ENCODE measurements at regions of chr5 and their contacts with region 1.

Region 1: DNA sequence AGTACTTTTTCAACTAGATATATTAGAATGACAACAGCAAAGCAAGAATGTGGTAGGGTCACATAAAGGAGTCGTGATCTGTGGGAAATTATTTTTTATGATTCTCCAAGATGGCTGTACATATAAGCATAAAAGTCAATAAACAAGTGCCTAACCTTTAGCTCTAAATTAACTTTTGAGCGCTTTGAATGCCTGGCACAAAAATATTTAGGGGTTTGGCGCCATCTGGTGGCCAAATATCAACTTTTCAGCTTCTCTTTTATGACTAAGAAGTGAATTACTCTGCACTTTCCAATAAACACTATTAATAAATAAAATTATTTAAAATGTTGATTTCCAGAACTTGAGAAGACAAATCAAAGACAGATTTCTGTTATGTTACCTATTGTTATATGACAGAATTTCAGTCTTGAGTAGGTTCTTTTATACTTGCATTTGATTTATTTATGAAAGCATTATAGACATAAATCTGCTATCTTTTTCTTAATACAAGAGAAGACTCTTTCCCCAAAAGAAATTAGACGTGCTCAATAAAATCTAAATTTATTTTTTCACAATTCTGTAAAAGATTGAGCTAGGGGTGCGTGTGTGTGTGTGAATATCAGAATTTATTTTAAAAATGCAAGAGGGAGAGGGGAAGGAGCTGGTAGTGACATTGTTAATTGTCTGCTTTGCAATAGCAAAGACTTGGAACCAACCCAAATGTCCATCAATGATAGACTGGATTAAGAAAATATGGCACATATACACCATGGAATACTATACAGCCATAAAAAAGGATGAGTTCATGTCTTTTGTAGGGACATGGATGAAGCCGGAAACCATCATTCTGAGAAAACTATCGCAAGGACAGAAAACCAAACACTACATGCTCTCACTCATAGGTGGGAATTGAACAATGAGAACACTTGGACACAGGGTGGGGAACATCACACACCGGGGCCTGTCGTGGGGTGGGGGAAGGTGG is 36.7 kb upstream of the ARRDC3 start:
- DNase-seq: peak; percentile 53 to 68
- H3K4me3 ChIP-seq: no peak overlapping the region
- H3K27ac ChIP-seq: no peak overlapping the region
- H3K4me1 ChIP-seq: no peaks in the 10 kb centered on the region
- H3K27me3 ChIP-seq: no peaks in the 10 kb centered on the region
- CTCF ChIP-seq: peak; percentile 87

Region 2: DNA sequence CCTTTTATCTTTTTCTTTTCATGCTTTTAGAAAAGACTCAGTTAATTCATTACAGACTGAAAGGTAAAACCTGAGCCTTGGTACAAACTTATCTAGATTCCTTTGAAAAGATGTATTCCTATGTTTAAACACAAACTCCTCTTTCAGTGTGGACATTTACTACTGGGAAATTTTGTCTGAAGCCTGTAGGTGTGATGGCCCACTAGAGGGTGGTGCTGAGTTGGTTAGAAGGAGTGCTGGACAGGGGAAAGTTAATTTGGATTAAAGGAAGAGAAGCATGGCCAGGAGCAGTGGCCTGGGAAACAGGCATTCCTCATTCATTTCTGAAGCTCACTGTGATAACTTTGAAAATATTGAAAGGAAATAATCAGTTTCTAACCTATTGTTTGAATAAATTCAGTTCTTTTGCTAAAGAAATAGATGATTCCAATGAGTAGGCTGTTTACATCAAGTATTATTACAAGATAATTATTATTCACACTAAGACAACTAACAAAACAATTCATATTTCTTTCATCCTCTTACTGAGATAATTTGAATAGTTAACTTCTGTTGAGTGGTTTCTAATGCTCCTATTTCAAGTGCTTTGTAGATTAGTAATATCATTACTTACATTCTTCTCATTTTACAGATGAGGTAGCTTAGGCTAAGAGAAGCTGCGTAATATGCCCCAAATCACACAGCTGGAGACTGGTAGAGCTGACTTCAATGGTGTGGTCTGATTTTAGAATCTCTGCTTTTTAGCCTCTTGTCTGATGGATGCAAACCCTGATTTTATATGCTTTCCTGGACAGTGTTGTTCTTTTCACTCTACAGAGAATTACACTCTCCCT is 710.3 kb before region 1 on chr5:
- CTCF ChIA-PET with region 1: no interaction called
- POLR2A ChIA-PET with region 1: no interaction called
- intact Hi-C with region 1: loop called (anchors 5 kb)
- DNase-seq: peak in 1 of 2 experiments; percentile 25
- H3K4me3 ChIP-seq: no peak overlapping the region
- H3K27ac ChIP-seq: no peak overlapping the region
- H3K4me1 ChIP-seq: no peaks in the 10 kb centered on the region
- H3K27me3 ChIP-seq: no peaks in the 10 kb centered on the region
- CTCF ChIP-seq: peak; percentile 75

Region 3: GRCh38 chr5:90802474-90803317 is 617.2 kb before region 1 on chr5:
- CTCF ChIA-PET with region 1: interaction called, 5 read pairs
- POLR2A ChIA-PET with region 1: no interaction called
- intact Hi-C with region 1: loop called (anchors 5 kb)
- DNase-seq: peak; percentile 32 to 53
- H3K4me3 ChIP-seq: no peak overlapping the region
- H3K27ac ChIP-seq: no peak overlapping the region
- H3K4me1 ChIP-seq: no peaks in the 10 kb centered on the region
- H3K27me3 ChIP-seq: no peaks in the 10 kb centered on the region
- CTCF ChIP-seq: peak; percentile 79

Region 4: DNA sequence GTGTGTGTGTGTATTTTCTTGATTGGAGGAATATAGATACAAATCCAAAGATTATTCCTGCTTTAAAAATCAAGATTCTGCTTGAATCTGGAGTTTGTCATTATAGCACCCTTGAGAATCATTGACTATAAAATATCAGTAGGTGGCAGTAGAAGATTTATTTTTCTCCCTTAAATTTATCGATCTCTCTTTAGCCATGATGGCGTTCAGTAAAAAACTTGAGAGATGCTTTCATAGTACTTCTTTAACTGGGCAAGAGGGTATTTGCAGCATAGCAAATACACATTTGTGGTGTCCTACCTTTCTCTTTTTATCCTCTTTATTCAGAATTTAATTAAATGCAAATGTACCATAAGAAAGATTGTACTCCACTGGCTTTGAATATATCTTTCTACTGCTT is 553.5 kb before region 1 on chr5:
- CTCF ChIA-PET with region 1: interaction called, 7 read pairs
- POLR2A ChIA-PET with region 1: no interaction called
- intact Hi-C with region 1: loop called (anchors 1 kb)
- DNase-seq: peak in 1 of 2 experiments; percentile 45
- H3K4me3 ChIP-seq: no peak overlapping the region
- H3K27ac ChIP-seq: no peak overlapping the region
- H3K4me1 ChIP-seq: no peaks in the 10 kb centered on the region
- H3K27me3 ChIP-seq: no peaks in the 10 kb centered on the region
- CTCF ChIP-seq: peak; percentile 78

Region 5: GRCh38 chr5:90932052-90932699 is 487.7 kb before region 1 on chr5:
- CTCF ChIA-PET with region 1: interaction called, 5 read pairs
- POLR2A ChIA-PET with region 1: no interaction called
- intact Hi-C with region 1: loop called (anchors 1 kb)
- DNase-seq: peak; percentile 34 to 52
- H3K4me3 ChIP-seq: no peak overlapping the region
- H3K27ac ChIP-seq: peak overlapping the region; percentile 45
- H3K4me1 ChIP-seq: peaks cover 8% of the 10 kb centered on the region
- H3K27me3 ChIP-seq: no peaks in the 10 kb centered on the region
- CTCF ChIP-seq: peak; percentile 73

Region 6: DNA sequence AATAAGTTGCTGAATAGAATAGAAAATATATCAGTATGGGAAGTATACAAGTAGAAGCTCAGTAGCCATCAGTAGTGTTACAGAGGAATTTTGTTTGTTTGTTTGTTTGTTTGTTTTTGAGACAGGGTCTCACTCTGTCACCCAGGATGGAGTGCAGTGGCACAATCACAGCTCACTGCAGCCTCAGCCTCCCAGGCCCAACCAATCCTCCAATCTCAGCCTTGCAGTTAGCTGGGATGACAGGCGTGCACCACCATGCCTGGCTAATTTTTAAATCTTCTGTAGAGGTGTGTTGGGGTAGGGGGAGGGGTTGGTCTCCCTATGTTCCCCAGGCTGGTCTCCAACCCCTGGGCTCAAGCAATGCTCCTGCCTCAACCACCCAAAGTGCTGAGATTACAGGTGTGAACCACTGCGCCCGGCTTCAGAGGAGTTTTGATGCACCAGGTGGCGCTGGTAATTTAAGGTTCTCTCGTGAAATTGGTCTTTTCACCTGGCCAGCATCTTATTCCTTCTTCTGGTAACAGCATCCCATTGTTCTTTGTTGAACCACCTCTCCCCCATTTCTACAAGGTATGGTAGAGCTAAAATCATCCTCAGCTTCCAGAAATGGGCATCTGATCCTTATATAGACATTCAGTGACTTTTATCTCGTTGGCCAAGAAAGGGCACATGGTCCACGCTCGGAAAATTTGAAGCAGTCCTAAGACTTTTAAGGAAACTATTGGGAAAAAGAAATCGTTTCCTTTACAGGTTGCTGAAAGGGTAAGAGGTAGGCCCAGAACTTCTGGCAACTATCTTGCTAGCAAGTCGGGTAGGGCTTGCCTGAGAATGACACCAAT is 193.8 kb before region 1 on chr5:
- CTCF ChIA-PET with region 1: no interaction called
- POLR2A ChIA-PET with region 1: no interaction called
- intact Hi-C with region 1: loop called (anchors 1 kb)
- DNase-seq: peak in 1 of 2 experiments; percentile 46
- H3K4me3 ChIP-seq: no peak overlapping the region
- H3K27ac ChIP-seq: no peak overlapping the region
- H3K4me1 ChIP-seq: no peaks in the 10 kb centered on the region
- H3K27me3 ChIP-seq: no peaks in the 10 kb centered on the region
- CTCF ChIP-seq: peak; percentile 65

Measured in PC-9 (cell line).